H1 (cell line): ENCODE measurements at regions of chr2 and their contacts with region 1.

Region 1: GRCh38 chr2:127128445-127128904 is 21.5 kb upstream of the BIN1 start:
- DNase-seq: peak in 1 of 2 experiments; percentile 61
- H3K4me3 ChIP-seq: peak overlapping the region in 1 of 4 experiments; percentile 25; a peak in 1 of 8 replicates
- H3K27ac ChIP-seq: no peak overlapping the region
- H3K4me1 ChIP-seq: peaks cover 0 to 3% (median under 1%) of the 10 kb centered on the region in 4 experiments; a peak in 3 of 7 replicates
- H3K27me3 ChIP-seq: no peaks in the 10 kb centered on the region
- CTCF ChIP-seq: no peak
- EP300 ChIP-seq: no peak
- POLR2A ChIP-seq: 0 out of 3 replicates have a peak, but pooled peaks of 1 of the 2 experiments have one; percentile 39
- RAD21 ChIP-seq: peak; percentile 16 to 29; a peak in 1 of 4 replicates

Region 2: DNA sequence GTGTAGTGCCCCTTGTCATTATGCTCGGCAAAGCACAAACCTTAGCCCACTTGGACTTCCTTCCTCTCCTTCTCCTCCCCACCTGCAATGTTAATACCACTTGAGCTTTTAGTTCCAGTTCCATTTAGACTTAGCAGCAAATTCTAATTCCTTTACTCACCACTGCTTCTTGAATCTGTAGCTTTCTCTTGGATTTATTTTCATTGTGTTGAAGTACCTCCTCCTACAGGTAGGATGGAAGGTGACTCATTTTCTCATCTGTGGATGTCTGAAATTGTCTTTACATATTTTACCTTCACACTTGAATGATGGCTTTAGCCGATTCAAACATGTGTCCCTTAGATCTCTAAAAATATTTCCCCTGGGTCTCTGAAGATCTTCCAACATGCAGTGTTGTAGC is 11.3 kb after region 1 on chr2:
- CTCF ChIA-PET with region 1: interaction called, 21 read pairs
- POLR2A ChIA-PET with region 1: no interaction called
- DNase-seq: no peak
- H3K4me3 ChIP-seq: no peak overlapping the region
- H3K27ac ChIP-seq: no peak overlapping the region
- H3K4me1 ChIP-seq: no peaks in the 10 kb centered on the region
- H3K27me3 ChIP-seq: 0 out of 7 replicates have a peak, but pooled peaks cover 0 to 2% (median 0%) of the 10 kb centered on the region in 4 experiments
- CTCF ChIP-seq: no peak
- EP300 ChIP-seq: no peak
- POLR2A ChIP-seq: no peak
- RAD21 ChIP-seq: no peak